PC-9 (cell line): ENCODE measurements at regions of chr15 and their contacts with region 1.

Region 1: GRCh38 chr15:74179341-74179841 is 5.9 kb downstream of the ISLR start:
- DNase-seq: peak; percentile 94 to 95
- H3K4me3 ChIP-seq: no peak overlapping the region
- H3K27ac ChIP-seq: peak overlapping the region; percentile 75
- H3K4me1 ChIP-seq: peaks cover 43% of the 10 kb centered on the region
- H3K27me3 ChIP-seq: no peaks in the 10 kb centered on the region
- CTCF ChIP-seq: no peak

Region 2: DNA sequence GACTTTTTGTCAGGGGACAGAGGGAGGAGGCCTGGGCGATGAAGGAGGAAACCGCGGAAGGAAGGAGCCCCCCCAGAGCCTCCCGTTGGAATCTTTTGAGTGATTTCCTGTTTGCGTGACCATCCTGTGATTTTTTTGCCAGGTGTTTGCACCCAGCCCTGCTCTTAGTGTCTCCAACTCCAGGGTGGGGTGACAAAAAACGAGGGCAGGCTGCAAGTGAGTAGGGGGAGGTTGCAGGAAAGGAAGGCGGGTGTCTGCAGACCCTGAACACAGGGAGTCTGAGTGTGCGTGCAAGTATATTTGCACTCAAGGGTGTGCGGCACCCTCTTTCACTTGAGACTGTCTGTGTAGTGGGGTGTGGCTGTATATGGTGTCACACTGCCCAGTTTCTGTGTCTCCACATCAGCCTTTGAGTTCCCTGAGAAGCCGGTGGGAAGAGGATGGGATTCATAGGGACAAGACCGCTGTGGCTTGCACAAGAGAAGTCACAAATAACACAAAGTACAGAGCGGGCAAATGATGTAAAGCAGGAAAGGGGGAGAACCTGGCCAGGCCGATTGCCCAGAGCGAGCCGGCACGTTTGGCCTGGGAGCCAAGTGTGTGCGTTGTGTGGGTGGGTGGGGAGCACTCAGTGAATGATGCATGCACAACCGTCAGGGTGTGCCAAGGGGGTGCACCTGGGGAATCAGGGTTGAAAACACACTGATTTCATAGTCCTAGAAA is 42.4 kb before region 1 on chr15:
- CTCF ChIA-PET with region 1: no interaction called
- POLR2A ChIA-PET with region 1: no interaction called
- intact Hi-C with region 1: loop called (anchors 2 kb)
- DNase-seq: no peak
- H3K4me3 ChIP-seq: peak overlapping the region; percentile 70
- H3K27ac ChIP-seq: peak overlapping the region; percentile 74
- H3K4me1 ChIP-seq: peaks cover 20% of the 10 kb centered on the region
- H3K27me3 ChIP-seq: no peaks in the 10 kb centered on the region
- CTCF ChIP-seq: no peak

Region 3: DNA sequence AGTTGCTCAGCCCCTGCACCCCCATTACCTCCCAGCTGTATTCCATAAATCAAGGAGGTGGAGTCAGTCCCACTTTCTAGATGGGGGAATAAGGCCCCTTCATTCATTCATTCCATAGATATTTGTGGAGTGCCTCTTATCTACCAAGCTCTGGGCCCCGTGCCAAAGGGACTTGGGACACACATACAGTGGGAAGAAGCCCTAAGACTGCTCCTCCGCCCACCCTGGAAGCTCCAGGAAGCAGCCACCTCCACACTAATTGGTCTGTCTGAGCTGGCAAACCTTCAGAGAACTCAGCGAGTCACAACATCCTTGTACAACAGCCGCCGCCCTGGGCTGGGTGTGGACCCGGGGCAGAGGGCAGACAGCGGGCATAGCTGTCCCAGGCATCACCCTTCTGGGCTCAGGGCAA is 16.8 kb after region 1 on chr15:
- CTCF ChIA-PET with region 1: interaction called, 5 read pairs
- POLR2A ChIA-PET with region 1: interaction called, 17 read pairs
- intact Hi-C with region 1: loop called (anchors 1 kb)
- DNase-seq: peak; percentile 96 to 98
- H3K4me3 ChIP-seq: no peak overlapping the region; the same call in 1 of the 2 replicates
- H3K27ac ChIP-seq: peak overlapping the region; percentile 95
- H3K4me1 ChIP-seq: peaks cover 93% of the 10 kb centered on the region
- H3K27me3 ChIP-seq: no peaks in the 10 kb centered on the region
- CTCF ChIP-seq: no peak

Region 4: DNA sequence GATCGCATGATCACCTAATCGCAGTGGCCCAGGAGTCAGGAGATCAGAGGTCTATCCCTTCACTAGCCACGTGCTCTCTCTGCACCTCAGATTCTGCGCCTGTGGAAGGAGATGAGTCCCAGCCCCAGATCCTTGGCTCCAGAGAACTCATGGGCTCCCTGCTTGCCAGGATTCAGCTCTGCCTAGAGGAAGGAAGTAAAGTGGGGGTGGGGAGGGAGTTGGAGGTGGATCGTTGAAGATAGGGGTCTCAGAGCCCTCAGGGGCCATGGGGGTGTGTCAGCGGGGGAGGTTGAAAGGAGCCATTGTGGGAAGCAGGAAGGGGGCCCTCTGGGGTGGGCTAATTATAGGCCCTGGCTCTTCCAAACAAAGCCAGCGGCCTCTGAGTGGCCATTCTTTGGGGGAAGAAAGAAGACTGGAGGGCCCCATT is 34.5 kb after region 1 on chr15:
- CTCF ChIA-PET with region 1: no interaction called
- POLR2A ChIA-PET with region 1: interaction called, 8 read pairs
- intact Hi-C with region 1: loop called (anchors 1 kb)
- DNase-seq: no peak
- H3K4me3 ChIP-seq: no peak overlapping the region
- H3K27ac ChIP-seq: peak overlapping the region; percentile 88
- H3K4me1 ChIP-seq: peaks cover 69% of the 10 kb centered on the region
- H3K27me3 ChIP-seq: no peaks in the 10 kb centered on the region
- CTCF ChIP-seq: no peak

Region 5: GRCh38 chr15:74302821-74303359 is 123.5 kb after region 1 on chr15:
- CTCF ChIA-PET with region 1: no interaction called
- POLR2A ChIA-PET with region 1: no interaction called
- intact Hi-C with region 1: loop called (anchors 5 kb)
- DNase-seq: peak in 1 of 2 experiments; percentile 62
- H3K4me3 ChIP-seq: no peak overlapping the region
- H3K27ac ChIP-seq: no peak overlapping the region
- H3K4me1 ChIP-seq: peaks cover 6% of the 10 kb centered on the region; the same call in 1 of the 2 replicates
- H3K27me3 ChIP-seq: 0 out of 2 replicates have a peak, but pooled peaks cover 4% of the 10 kb centered on the region
- CTCF ChIP-seq: peak; percentile 84